GM13977 (cell line): ENCODE measurements at regions of chr10 and their contacts with region 1.

Region 1: GRCh38 chr10:124827474-124827873 is 25.9 kb downstream of the ABRAXAS2 start:
- DNase-seq: peak; percentile 28
- CTCF ChIP-seq: peak; percentile 37

Region 2: DNA sequence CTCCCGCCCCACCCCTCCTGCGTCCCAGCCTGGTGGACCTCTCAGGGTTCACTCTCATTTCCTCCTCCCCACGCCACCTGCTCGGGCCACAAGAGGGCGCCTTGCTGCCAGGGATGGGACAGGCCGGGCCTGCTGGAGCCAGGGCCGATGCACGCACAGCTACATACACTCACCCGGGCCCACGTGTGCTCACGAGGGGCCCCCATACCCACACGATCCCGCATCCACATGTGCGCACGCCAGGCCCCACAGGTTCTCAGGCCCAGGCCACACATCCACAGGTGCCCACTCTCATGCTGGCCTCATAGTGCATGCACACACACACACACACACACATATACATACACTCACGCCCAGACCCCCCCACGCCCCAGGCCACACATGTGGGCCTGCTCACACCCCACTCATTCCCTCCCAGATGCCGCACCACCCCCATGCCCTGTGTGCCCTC is 297.2 kb before region 1 on chr10:
- in situ Hi-C with region 1: loop called (anchors 10 kb)
- DNase-seq: peak; percentile 94
- CTCF ChIP-seq: peak; percentile 100